ENCODE measurements at regions of chr6 and their contacts with region 1.

Region 1: GRCh38 chr6:11366183-11366933 is 133.9 kb upstream of the NEDD9 start:
- DNase-seq: peak; percentile 72
- ATAC-seq: peak; percentile 65
- H3K4me3 Mint-ChIP-seq: peak overlapping the region; percentile 37
- H3K27ac Mint-ChIP-seq: peak overlapping the region; percentile 81
- H3K4me1 Mint-ChIP-seq: peaks cover 95% of the 10 kb centered on the region
- H3K27me3 Mint-ChIP-seq: no peaks in the 10 kb centered on the region

Region 2: GRCh38 chr6:10759312-10759839 is 607.0 kb before region 1 on chr6:
- CTCF ChIA-PET with region 1: no interaction called
- POLR2A ChIA-PET with region 1: no interaction called
- intact Hi-C with region 1: no loop called
- DNase-seq: no peak
- ATAC-seq: peak; percentile 64
- H3K4me3 Mint-ChIP-seq: no peak overlapping the region
- H3K27ac Mint-ChIP-seq: no peak overlapping the region
- H3K4me1 Mint-ChIP-seq: peaks cover 33% of the 10 kb centered on the region
- H3K27me3 Mint-ChIP-seq: no peaks in the 10 kb centered on the region

Region 3: GRCh38 chr6:11093589-11094410 is 272.6 kb before region 1 on chr6 and contains the start of gene SMIM13:
- CTCF ChIA-PET with region 1: interaction called, 3 read pairs
- POLR2A ChIA-PET with region 1: no interaction called
- intact Hi-C with region 1: loop called (anchors 5 kb)
- DNase-seq: peak; percentile 98
- ATAC-seq: peak; percentile 95
- H3K4me3 Mint-ChIP-seq: peak within 1 kb of the TSS; percentile 96
- H3K27ac Mint-ChIP-seq: peak within 1 kb of the TSS; percentile 99
- H3K4me1 Mint-ChIP-seq: peaks cover 25% of the 10 kb centered on the region
- H3K27me3 Mint-ChIP-seq: no peaks in the 10 kb centered on the region
- total RNA-seq, gene SMIM13: 6.3 to 7.9 TPM

Region 4: GRCh38 chr6:11277275-11278206 is 88.8 kb before region 1 on chr6:
- CTCF ChIA-PET with region 1: interaction called, 4 read pairs
- POLR2A ChIA-PET with region 1: interaction called, 4 read pairs
- intact Hi-C with region 1: loop called (anchors 1 to 5 kb)
- DNase-seq: peak; percentile 53
- ATAC-seq: peak; percentile 76
- H3K4me3 Mint-ChIP-seq: peak overlapping the region; percentile 40
- H3K27ac Mint-ChIP-seq: peak overlapping the region; percentile 91
- H3K4me1 Mint-ChIP-seq: peaks cover 46% of the 10 kb centered on the region
- H3K27me3 Mint-ChIP-seq: no peaks in the 10 kb centered on the region

Region 5: GRCh38 chr6:11343963-11344747 is 22.2 kb before region 1 on chr6:
- CTCF ChIA-PET with region 1: interaction called, 3 read pairs
- POLR2A ChIA-PET with region 1: no interaction called
- intact Hi-C with region 1: loop called (anchors 1 kb)
- DNase-seq: no peak
- ATAC-seq: no peak
- H3K4me3 Mint-ChIP-seq: no peak overlapping the region
- H3K27ac Mint-ChIP-seq: peak overlapping the region; percentile 86
- H3K4me1 Mint-ChIP-seq: peaks cover 78% of the 10 kb centered on the region
- H3K27me3 Mint-ChIP-seq: no peaks in the 10 kb centered on the region

Region 6: GRCh38 chr6:11414176-11414963 is 48.0 kb after region 1 on chr6:
- CTCF ChIA-PET with region 1: no interaction called
- POLR2A ChIA-PET with region 1: no interaction called
- intact Hi-C with region 1: loop called (anchors 1 kb)
- DNase-seq: peak; percentile 60
- ATAC-seq: peak; percentile 45
- H3K4me3 Mint-ChIP-seq: no peak overlapping the region
- H3K27ac Mint-ChIP-seq: peak overlapping the region; percentile 42
- H3K4me1 Mint-ChIP-seq: peaks cover 50% of the 10 kb centered on the region
- H3K27me3 Mint-ChIP-seq: no peaks in the 10 kb centered on the region

Region 7: GRCh38 chr6:11711003-11711983 is 344.9 kb after region 1 on chr6:
- CTCF ChIA-PET with region 1: no interaction called
- POLR2A ChIA-PET with region 1: no interaction called
- intact Hi-C with region 1: loop called in 1 of 2 experiments (anchors 5 kb)
- DNase-seq: peak; percentile 86
- ATAC-seq: peak; percentile 57
- H3K4me3 Mint-ChIP-seq: peak overlapping the region; percentile 75
- H3K27ac Mint-ChIP-seq: peak overlapping the region; percentile 100
- H3K4me1 Mint-ChIP-seq: peaks cover 80% of the 10 kb centered on the region
- H3K27me3 Mint-ChIP-seq: no peaks in the 10 kb centered on the region